ENCODE measurements at regions of chr1 and their contacts with region 1.

Region 1: DNA sequence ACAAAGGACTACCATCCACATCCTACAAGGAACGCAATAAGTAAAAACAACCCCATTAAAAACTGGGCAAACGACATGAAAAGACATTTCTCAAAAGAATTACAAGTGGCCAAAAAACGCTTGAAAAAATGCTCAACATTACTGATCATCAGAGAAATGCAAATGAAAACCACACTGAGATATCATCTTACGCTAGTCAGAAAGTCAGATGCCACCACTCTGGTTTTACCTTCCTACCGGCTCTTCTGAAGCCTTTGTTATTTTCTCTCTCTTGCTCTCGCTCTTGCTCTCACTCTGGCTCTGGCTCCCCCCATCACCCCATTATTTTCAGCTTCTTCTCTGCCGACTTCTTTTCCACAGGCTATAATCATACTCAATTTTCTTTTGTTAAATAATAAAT is 38.8 kb downstream of the VPS45 start:
- DNase-seq: peak; percentile 58 to 72 (median 66)
- H3K4me3 ChIP-seq: no peak overlapping the region
- H3K4me3 Mint-ChIP-seq: peak overlapping the region; percentile 71 to 90 (median 86)
- H3K27ac ChIP-seq: peak overlapping the region; percentile 25
- H3K27ac Mint-ChIP-seq: peak overlapping the region; percentile 92 to 98 (median 94)
- H3K4me1 ChIP-seq: peaks cover 83% of the 10 kb centered on the region
- H3K4me1 Mint-ChIP-seq: peaks cover 64 to 92% (median 75%) of the 10 kb centered on the region in 4 donors
- H3K27me3 ChIP-seq: no peaks in the 10 kb centered on the region
- H3K27me3 Mint-ChIP-seq: no peaks in the 10 kb centered on the region

Region 2: GRCh38 chr1:150034336-150034735 is 72.0 kb before region 1 on chr1:
- CTCF ChIA-PET with region 1: no interaction called
- POLR2A ChIA-PET with region 1: no interaction called
- intact Hi-C with region 1: no loop called
- DNase-seq: no peak
- H3K4me3 ChIP-seq: no peak overlapping the region
- H3K4me3 Mint-ChIP-seq: no peak overlapping the region
- H3K27ac ChIP-seq: no peak overlapping the region
- H3K27ac Mint-ChIP-seq: no peak overlapping the region
- H3K4me1 ChIP-seq: no peaks in the 10 kb centered on the region
- H3K4me1 Mint-ChIP-seq: no peaks in the 10 kb centered on the region
- H3K27me3 ChIP-seq: no peaks in the 10 kb centered on the region
- H3K27me3 Mint-ChIP-seq: no peaks in the 10 kb centered on the region

Region 3: DNA sequence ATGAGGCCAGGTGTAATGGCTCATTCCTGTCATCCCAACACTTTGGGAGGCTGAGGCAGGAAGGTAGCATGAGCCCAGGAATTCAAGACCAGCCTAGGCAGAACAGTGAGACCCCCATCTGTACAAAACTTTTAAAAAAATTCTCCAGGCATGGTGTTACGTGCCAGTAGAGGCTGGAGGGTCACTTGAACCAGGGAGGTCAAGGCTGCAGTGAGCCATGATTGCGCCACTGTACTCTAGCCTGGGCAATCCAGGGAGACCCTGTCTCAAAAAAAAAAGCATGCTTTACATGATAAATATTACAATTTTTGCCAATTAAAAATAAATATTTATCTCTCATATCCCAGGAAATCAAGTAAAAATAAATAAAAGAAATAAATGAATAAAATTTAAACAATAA is 56.4 kb before region 1 on chr1:
- CTCF ChIA-PET with region 1: no interaction called
- POLR2A ChIA-PET with region 1: no interaction called
- intact Hi-C with region 1: no loop called
- DNase-seq: no peak
- H3K4me3 ChIP-seq: no peak overlapping the region
- H3K4me3 Mint-ChIP-seq: no peak overlapping the region
- H3K27ac ChIP-seq: no peak overlapping the region
- H3K27ac Mint-ChIP-seq: no peak overlapping the region
- H3K4me1 ChIP-seq: no peaks in the 10 kb centered on the region
- H3K4me1 Mint-ChIP-seq: peaks cover 0 to 3% (median 1%) of the 10 kb centered on the region in 4 donors
- H3K27me3 ChIP-seq: no peaks in the 10 kb centered on the region
- H3K27me3 Mint-ChIP-seq: peaks cover 0 to 1% of the 10 kb centered on the region in 2 donors

Region 4: DNA sequence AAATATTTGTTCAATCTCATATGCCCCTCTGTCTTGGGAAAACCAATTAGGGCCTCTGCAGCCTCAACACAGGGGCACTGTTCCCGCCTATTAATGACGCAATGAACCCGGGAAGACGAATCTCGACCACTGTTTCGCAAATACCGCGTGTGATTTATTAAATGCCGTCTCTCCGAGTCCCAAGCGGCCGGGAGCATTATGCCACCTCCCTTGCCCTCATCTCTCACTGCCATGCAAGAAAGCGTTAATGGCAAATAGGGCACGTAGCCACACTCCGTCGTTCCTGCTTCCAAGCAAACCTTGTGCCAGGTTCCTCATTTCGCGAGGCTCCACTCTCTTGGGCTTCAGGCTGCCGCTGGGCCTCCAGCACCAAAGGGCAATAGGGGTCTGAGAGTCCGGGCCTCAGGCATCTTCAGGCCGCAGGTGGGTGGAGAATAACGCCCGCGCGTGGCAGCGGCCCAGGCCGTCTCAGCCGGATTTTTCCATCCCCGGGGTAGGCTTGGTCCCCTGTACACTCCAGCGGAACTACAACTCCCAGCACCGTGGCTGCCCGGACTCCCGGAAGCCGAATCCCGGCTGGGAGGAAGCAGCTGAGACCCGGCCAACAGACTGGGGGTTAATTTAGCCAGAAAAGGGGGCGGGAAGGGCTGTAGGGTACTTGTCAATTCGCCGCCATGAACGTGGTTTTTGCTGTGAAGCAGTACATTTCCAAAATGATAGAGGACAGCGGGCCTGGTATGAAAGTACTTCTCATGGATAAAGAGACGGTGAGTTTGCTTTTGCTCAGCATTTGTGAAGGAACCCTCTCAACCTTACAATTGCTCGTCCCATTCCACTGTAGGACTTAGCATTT is 38.9 kb before region 1 on chr1 and contains the start of gene VPS45:
- CTCF ChIA-PET with region 1: interaction called, 11 read pairs
- POLR2A ChIA-PET with region 1: interaction called, 10 read pairs
- intact Hi-C with region 1: loop called (anchors 5 kb)
- DNase-seq: peak; percentile 69 to 82 (median 75)
- H3K4me3 ChIP-seq: peak within 1 kb of the TSS; percentile 70 to 88
- H3K4me3 Mint-ChIP-seq: peak within 1 kb of the TSS; percentile 91 to 98 (median 96)
- H3K27ac ChIP-seq: peak within 1 kb of the TSS; percentile 65
- H3K27ac Mint-ChIP-seq: peak within 1 kb of the TSS; percentile 91 to 97 (median 94)
- H3K4me1 ChIP-seq: peaks cover 30% of the 10 kb centered on the region
- H3K4me1 Mint-ChIP-seq: peaks cover 27 to 42% (median 35%) of the 10 kb centered on the region in 4 donors
- H3K27me3 ChIP-seq: no peaks in the 10 kb centered on the region
- H3K27me3 Mint-ChIP-seq: no peaks in the 10 kb centered on the region
- total RNA-seq, gene VPS45: 32.1 to 38.5 TPM

Region 5: GRCh38 chr1:150072959-150073358 is 33.4 kb before region 1 on chr1:
- CTCF ChIA-PET with region 1: interaction called, 11 read pairs
- POLR2A ChIA-PET with region 1: interaction called, 10 read pairs
- intact Hi-C with region 1: loop called (anchors 5 kb)
- DNase-seq: peak in 4 of 5 donors; percentile 45 to 59 (median 50)
- H3K4me3 ChIP-seq: no peak overlapping the region
- H3K4me3 Mint-ChIP-seq: no peak overlapping the region
- H3K27ac ChIP-seq: no peak overlapping the region
- H3K27ac Mint-ChIP-seq: peak overlapping the region in 4 of 7 donors; percentile 1 to 76 (median 66)
- H3K4me1 ChIP-seq: peaks cover 29% of the 10 kb centered on the region
- H3K4me1 Mint-ChIP-seq: peaks cover 35 to 47% (median 40%) of the 10 kb centered on the region in 4 donors
- H3K27me3 ChIP-seq: no peaks in the 10 kb centered on the region
- H3K27me3 Mint-ChIP-seq: no peaks in the 10 kb centered on the region

Region 6: GRCh38 chr1:150093805-150094204 is 12.5 kb before region 1 on chr1:
- CTCF ChIA-PET with region 1: interaction called, 4 read pairs
- POLR2A ChIA-PET with region 1: interaction called, 17 read pairs
- intact Hi-C with region 1: loop called (anchors 2 kb)
- DNase-seq: no peak
- H3K4me3 ChIP-seq: no peak overlapping the region
- H3K4me3 Mint-ChIP-seq: no peak overlapping the region
- H3K27ac ChIP-seq: no peak overlapping the region
- H3K27ac Mint-ChIP-seq: peak overlapping the region in 2 of 7 donors; percentile 2 to 42
- H3K4me1 ChIP-seq: peaks cover 46% of the 10 kb centered on the region
- H3K4me1 Mint-ChIP-seq: peaks cover 22 to 36% (median 25%) of the 10 kb centered on the region in 4 donors
- H3K27me3 ChIP-seq: no peaks in the 10 kb centered on the region
- H3K27me3 Mint-ChIP-seq: no peaks in the 10 kb centered on the region

Region 7: GRCh38 chr1:150121236-150121862 is 15.0 kb after region 1 on chr1:
- CTCF ChIA-PET with region 1: no interaction called
- POLR2A ChIA-PET with region 1: interaction called, 8 read pairs
- intact Hi-C with region 1: loop called (anchors 2 kb)
- DNase-seq: no peak
- H3K4me3 ChIP-seq: no peak overlapping the region
- H3K4me3 Mint-ChIP-seq: no peak overlapping the region
- H3K27ac ChIP-seq: no peak overlapping the region
- H3K27ac Mint-ChIP-seq: peak overlapping the region in 6 of 7 donors; percentile 1 to 65 (median 47)
- H3K4me1 ChIP-seq: peaks cover 12% of the 10 kb centered on the region
- H3K4me1 Mint-ChIP-seq: peaks cover 21 to 39% (median 29%) of the 10 kb centered on the region in 4 donors
- H3K27me3 ChIP-seq: no peaks in the 10 kb centered on the region
- H3K27me3 Mint-ChIP-seq: no peaks in the 10 kb centered on the region

Region 8: DNA sequence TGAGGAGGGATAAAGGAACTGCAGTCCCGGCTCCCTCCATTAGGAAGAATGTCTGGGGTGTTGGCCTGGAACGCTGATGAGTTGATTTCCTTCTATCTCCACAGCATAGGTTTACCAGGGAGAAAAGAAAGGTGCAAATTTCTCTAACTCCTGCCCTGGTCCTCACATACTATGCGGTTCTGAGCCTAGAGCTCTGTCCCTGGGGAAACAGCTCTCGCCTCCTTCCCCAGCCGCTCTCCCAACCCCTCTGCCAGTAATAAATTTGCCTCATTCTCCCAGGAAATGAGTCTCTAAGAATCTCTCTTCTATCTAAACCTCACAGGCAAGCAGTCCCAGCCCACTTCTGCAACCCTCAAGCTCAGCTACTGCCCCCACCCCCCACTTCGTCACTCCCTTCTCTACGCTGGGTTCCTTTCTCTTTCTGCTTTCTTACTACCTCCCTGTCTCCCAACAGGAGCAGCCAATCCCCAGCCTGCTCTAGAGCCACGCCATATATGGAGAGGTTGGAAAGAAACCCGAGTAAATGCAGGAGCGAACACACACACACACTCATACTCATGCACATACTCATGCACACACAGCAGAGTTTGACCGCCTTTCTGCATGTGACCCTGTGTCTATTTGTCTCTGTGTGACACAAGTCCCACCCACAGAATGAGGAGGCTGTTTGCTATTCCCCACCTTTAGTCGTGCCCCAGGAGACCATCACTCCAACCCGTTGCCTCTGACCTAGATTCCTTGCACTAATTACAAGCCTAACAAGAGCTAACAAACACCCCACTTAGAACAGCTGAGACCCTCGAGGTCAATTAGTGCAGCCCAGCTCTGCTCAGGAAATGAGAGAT is 56.7 kb after region 1 on chr1:
- CTCF ChIA-PET with region 1: interaction called, 11 read pairs
- POLR2A ChIA-PET with region 1: interaction called, 52 read pairs
- intact Hi-C with region 1: no loop called
- DNase-seq: no peak
- H3K4me3 ChIP-seq: no peak overlapping the region
- H3K4me3 Mint-ChIP-seq: peak overlapping the region in 5 of 8 donors; percentile 0 to 61 (median 34)
- H3K27ac ChIP-seq: no peak overlapping the region
- H3K27ac Mint-ChIP-seq: peak overlapping the region in 5 of 7 donors; percentile 34 to 83 (median 53)
- H3K4me1 ChIP-seq: peaks cover 40% of the 10 kb centered on the region
- H3K4me1 Mint-ChIP-seq: peaks cover 34 to 52% (median 42%) of the 10 kb centered on the region in 4 donors
- H3K27me3 ChIP-seq: no peaks in the 10 kb centered on the region
- H3K27me3 Mint-ChIP-seq: no peaks in the 10 kb centered on the region